Esophagus muscularis mucosa (tissue), 4 donors: ENCODE measurements at regions of chr21 and their contacts with region 1.

Region 1: DNA sequence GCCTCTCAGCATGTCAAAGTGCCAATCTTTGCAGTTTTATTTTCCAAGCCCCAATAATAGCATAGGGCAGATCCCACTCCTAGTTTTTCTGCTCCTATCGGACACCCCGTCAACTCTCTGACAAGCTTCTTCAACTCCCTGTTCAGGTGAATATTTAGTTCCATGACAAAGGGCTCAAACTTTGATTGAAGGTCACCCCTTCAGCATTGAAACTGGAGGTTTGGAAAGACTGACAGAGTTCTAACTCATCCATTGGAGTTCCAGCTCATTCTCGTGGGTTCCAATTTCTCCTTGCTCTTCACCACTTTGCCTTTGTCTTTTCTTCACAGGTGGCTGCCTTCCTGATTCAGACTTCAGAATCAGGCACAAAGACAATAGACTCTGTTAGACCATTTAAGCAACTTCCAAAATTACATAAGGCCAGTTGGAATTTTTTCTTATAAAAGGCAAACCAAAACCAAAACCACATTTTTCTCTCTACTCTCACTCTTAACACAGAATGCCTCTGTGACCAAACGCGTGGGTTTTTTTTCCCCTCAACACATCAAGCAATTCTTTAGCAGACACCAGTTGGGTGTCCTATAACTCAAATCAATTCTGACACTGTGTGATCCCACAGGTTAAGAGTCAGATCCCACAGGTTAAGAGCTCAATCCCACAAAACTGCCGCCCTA is 169.3 kb upstream of the USP25 start:
- DNase-seq: no peak
- H3K4me3 ChIP-seq: no peak overlapping the region
- H3K27ac ChIP-seq: no peak overlapping the region
- H3K4me1 ChIP-seq: no peaks in the 10 kb centered on the region
- H3K27me3 ChIP-seq: no peaks in the 10 kb centered on the region
- CTCF ChIP-seq: no peak
- EP300 ChIP-seq: no peak
- POLR2A ChIP-seq: no peak

Region 2: GRCh38 chr21:14414932-14415508 is 1145.5 kb before region 1 on chr21:
- intact Hi-C with region 1: loop called (anchors 10 kb)
- DNase-seq: no peak
- H3K4me3 ChIP-seq: no peak overlapping the region
- H3K27ac ChIP-seq: no peak overlapping the region
- H3K4me1 ChIP-seq: no peaks in the 10 kb centered on the region
- H3K27me3 ChIP-seq: no peaks in the 10 kb centered on the region
- CTCF ChIP-seq: no peak
- EP300 ChIP-seq: no peak
- POLR2A ChIP-seq: no peak

Region 3: DNA sequence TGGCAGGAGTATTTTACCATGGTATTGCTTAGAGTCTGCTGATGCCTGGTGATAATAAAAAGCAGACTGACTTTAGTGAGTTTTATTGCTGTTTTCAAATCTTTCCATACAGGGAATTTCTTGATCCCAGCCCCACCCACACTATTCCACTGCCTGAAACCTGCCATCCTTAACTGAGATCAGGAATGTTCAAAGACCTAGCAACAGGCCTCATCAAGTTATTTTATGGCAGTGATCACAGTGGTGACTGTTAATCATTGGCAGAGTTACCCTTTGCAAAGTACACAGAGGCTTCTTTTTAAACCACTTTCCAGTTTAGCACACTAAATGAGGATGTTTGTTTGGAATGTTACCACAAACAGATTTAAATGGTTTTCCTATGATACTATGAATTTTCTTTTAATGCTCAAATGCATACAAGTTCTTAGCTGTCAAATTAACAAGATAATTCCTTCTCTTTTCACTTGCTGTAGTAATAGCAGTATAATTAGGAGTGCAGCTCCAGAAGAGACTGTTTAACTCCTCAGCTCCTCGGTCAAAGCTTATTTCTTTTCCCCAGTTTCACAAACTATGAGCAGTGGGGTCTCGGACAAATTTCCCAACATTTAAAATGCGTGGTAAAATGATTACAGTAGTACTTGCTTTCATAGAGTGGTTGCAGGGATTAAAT is 99.4 kb after region 1 on chr21:
- intact Hi-C with region 1: no loop called
- DNase-seq: no peak
- H3K4me3 ChIP-seq: no peak overlapping the region
- H3K27ac ChIP-seq: no peak overlapping the region
- H3K4me1 ChIP-seq: peaks cover 0 to 3% (median 0%) of the 10 kb centered on the region in 4 donors
- H3K27me3 ChIP-seq: no peaks in the 10 kb centered on the region
- CTCF ChIP-seq: no peak
- EP300 ChIP-seq: no peak
- POLR2A ChIP-seq: no peak